AG04449 (cell line): ENCODE measurements at regions of chr17 and their contacts with region 1.

Region 1: DNA sequence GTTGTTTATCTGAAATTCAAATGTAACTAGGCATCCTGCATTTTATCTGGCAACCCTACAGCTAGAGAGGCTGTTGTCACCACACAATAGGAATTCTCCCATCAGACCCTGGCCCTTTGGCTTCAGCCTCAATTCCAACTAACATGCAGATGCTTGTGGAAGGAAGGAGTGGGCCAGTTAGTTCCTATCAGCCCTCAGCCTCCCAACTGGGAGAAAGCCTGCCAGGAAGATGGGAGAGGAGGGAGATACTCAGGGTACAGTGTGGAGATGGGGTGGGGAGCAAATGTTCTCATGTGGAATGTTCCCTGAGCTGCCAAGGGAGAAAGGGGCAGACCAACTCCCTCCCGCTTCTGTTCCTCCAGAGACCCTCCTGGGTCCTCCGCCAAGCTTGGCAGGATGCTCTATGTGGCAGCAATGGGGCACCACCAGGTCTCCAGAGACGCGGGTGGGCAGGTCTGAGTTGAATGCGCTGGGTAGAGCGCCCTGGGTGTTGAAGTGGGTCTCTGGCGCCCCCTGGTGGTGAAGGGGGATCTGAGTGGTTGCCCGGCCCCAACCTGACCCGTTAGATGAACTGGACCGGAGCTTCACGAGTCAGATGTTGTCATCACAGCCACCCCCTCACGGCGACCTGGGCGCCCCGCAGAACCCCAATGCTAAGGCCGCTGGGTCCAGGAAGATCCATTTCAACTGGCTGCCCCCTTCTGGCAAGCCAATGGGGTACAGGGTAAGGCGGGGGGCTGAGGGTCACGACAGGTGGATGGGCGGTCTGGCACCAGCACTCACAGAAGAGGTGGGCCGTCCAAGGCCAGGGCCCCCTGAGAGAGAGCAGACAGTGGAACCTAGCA is 15.2 kb downstream of the GALK1 start:
- DNase-seq: no peak
- H3K4me3 ChIP-seq: no peak overlapping the region
- CTCF ChIP-seq: peak; percentile 86

Region 2: DNA sequence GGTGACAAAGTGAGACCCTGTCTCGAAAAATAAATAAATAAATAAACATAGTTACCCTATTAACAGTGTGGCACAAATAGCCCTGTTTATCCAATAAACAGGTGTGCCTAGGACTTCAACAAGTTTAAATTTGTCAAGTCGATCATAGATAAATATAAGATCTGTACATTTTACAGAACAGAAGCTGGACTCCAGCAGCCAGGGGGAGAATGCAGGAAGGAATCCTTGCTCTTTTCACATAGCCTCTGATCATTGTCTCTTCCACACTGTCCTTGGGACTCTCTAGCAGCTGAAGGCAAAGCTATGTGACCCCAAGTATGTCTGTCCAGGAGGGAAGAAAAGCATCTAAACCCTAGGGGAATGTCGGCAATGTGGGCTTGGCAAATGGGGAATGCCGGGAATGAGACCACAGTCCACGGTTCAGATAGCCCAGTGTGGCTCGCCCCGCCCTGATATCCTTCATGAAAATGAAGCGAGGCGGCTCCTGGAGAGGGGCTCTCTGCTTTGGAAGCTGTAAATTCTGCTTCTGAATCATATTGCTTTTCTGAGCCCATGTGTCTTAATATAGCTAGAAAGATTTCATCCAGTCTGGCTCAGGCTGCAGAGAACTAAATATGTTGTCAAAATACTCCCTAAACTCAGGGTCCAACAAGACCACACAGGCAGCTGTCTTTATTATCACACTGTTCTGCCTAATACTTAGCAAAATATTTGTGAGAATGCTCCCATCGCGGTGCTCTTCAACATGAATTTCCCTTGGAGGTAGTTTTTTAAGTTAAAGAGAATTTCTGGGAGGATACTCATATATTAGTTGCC is 319.4 kb before region 1 on chr17:
- CTCF ChIA-PET with region 1: interaction called, 86 read pairs
- POLR2A ChIA-PET with region 1: no interaction called
- DNase-seq: peak; percentile 82
- H3K4me3 ChIP-seq: no peak overlapping the region; the same call in 1 of the 2 replicates
- CTCF ChIP-seq: no peak

Region 3: DNA sequence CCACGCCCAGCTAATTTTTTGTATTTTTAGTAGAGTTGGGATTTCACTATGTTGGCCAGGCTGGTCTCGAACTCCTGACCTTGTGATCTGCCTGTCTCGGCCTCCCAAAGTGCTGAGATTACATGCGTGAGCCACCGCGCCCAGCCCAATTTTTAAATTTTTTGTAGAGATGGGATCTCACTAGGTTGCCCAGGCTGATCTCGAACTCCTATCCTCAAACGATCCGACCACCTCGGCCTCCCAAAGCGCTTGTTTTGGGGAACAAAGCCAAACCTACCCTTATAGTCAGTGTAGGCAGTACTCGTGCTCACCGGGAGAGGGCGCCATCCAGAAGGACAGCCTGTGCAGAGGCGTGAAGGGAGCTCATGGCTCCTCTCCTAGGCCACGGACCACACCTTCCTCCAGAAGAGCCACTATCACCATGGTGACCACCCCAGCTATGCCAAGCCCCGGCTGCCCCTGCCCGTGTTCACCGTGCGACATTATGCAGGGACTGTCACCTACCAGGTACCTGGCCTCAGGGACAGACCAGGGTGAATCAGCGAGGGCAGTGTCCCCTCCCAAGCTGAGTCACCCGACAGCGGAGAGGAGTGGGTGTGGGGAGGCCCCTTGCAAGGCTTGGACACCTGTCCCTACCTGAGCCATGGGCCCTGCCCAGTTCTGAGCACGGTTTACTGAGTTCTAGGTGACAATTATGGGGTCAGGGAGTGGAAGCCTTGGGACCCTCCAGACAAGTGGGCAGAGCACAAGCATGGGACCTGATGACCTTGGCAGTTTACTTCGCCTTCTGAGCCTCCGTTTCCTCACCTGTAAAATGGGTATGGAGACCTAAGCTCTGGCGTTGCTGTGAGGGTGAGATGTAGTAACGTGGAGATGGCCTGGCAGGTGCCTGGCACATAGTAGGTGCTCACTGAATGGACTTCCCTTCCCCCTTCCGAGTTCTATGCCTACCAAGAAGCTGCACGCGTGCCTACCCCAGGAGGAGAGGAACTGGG is 148.4 kb before region 1 on chr17:
- CTCF ChIA-PET with region 1: interaction called, 62 read pairs
- POLR2A ChIA-PET with region 1: no interaction called
- DNase-seq: no peak
- H3K4me3 ChIP-seq: no peak overlapping the region
- CTCF ChIP-seq: peak; percentile 66

Region 4: DNA sequence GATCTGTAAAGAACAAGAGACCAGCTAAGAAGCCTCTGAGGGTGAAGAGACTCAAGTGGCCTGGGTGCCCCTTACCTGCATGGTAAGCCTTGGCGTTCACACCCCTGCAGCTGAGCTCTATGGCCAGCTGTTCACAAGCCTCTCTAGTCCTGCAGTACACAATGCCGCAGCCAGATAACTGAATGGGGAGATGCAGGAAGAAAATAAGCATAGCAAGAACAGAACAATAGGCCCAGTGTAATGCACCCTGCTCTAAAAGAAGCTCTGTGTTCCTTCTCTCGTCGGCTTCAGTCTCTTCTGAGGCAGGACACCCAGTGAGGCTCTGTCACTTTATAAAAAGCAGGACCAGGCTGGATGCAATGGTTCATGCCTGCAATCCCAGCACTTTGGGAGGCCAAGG is 88.2 kb before region 1 on chr17:
- CTCF ChIA-PET with region 1: interaction called, 203 read pairs
- POLR2A ChIA-PET with region 1: interaction called, 5 read pairs
- DNase-seq: no peak
- H3K4me3 ChIP-seq: no peak overlapping the region
- CTCF ChIP-seq: no peak

Region 5: DNA sequence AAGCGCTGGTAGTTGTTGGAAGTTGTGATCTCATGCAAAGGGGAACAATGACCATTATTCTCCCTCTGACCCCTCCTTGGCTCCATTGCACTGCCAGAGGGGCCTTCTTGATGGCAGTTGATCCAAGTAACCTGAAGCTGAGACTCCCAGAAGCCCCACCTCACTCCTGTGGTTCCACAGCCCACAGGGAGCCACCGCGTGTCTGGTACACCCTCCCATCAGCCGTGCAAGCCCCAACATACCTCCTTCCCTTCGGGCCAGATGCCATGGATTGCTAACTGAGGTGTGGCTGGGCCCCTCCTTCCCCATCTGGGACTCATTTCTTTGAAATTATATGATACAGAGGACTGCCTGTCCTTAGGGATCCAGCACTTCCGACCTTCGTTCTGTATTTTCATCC is 64.8 kb before region 1 on chr17:
- CTCF ChIA-PET with region 1: no interaction called
- POLR2A ChIA-PET with region 1: no interaction called
- DNase-seq: no peak
- H3K4me3 ChIP-seq: no peak overlapping the region
- CTCF ChIP-seq: no peak

Region 6: GRCh38 chr17:75720725-75721462 is 28.9 kb before region 1 on chr17 and contains the start of gene ITGB4:
- CTCF ChIA-PET with region 1: interaction called, 13 read pairs
- POLR2A ChIA-PET with region 1: no interaction called
- DNase-seq: no peak
- H3K4me3 ChIP-seq: peak within 1 kb of the TSS; percentile 23; the same call in 1 of the 2 replicates
- CTCF ChIP-seq: no peak

Region 7: GRCh38 chr17:75764711-75765421 is 15.1 kb after region 1 on chr17 and contains the start of gene GALK1:
- CTCF ChIA-PET with region 1: interaction called, 99 read pairs
- POLR2A ChIA-PET with region 1: interaction called, 6 read pairs
- DNase-seq: no peak
- H3K4me3 ChIP-seq: peak within 1 kb of the TSS; percentile 66
- CTCF ChIP-seq: peak; percentile 77

Region 8: GRCh38 chr17:75827252-75828115 is 77.7 kb after region 1 on chr17:
- CTCF ChIA-PET with region 1: interaction called, 20 read pairs
- POLR2A ChIA-PET with region 1: no interaction called
- DNase-seq: no peak
- H3K4me3 ChIP-seq: peak overlapping the region; percentile 29
- CTCF ChIP-seq: peak; percentile 87

Region 9: GRCh38 chr17:76072148-76072858 is 322.5 kb after region 1 on chr17 and contains the start of gene SRP68:
- CTCF ChIA-PET with region 1: no interaction called
- POLR2A ChIA-PET with region 1: no interaction called
- DNase-seq: peak; percentile 64
- H3K4me3 ChIP-seq: peak within 1 kb of the TSS; percentile 91
- CTCF ChIP-seq: no peak